ENCODE measurements at regions of chr14 and their contacts with region 1.

Region 1: GRCh38 chr14:76947078-76947837 is 81.2 kb downstream of the IRF2BPL start:
- DNase-seq: peak; percentile 78 to 87
- ATAC-seq: peak; percentile 91 to 94
- H3K4me3 ChIP-seq: peak overlapping the region in 3 of 4 donors; percentile 10 to 41 (median 25)
- H3K27ac ChIP-seq: peak overlapping the region; percentile 77 to 84 (median 81)
- H3K4me1 ChIP-seq: peaks cover 25 to 26% of the 10 kb centered on the region in 2 donors
- H3K27me3 ChIP-seq: no peaks in the 10 kb centered on the region
- CTCF ChIP-seq: peak; percentile 53 to 75 (median 66)
- POLR2A ChIP-seq: no peak

Region 2: GRCh38 chr14:76910371-76910890 is 36.8 kb before region 1 on chr14:
- in situ Hi-C with region 1: loop called in 1 of 4 experiments (anchors 5 kb)
- intact Hi-C with region 1: no loop called
- DNase-seq: no peak
- ATAC-seq: no peak
- H3K4me3 ChIP-seq: no peak overlapping the region
- H3K27ac ChIP-seq: no peak overlapping the region
- H3K4me1 ChIP-seq: peaks cover 7 to 11% of the 10 kb centered on the region in 2 donors
- H3K27me3 ChIP-seq: no peaks in the 10 kb centered on the region
- CTCF ChIP-seq: no peak
- POLR2A ChIP-seq: no peak

Measured in gastrocnemius medialis (tissue), 4 donors.